GM10248 (cell line): ENCODE measurements at regions of chr1 and their contacts with region 1.

Region 1: GRCh38 chr1:246971090-246971721 is 36.7 kb downstream of the ZNF695 start:
- DNase-seq: no peak
- CTCF ChIP-seq: peak; percentile 93

Region 2: DNA sequence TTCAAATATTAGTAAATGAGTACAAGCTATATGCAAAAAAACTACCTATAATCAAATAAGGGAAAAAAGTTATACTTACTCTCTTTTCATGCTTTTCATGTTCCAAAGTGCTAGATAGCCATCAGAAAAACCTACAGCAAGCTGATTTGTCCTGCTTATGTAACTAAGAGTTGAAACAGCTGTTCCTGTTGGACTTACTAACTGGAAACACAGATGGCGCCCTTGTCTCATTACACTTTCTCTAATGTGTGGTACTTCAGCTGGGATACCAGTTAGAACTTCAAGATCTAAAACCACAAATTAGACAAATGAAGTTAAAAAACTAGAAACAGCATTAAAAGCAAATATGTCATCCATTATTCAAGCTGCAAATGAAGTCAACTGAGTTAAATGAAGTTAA is 63.7 kb before region 1 on chr1:
- CTCF ChIA-PET with region 1: interaction called, 11 read pairs
- POLR2A ChIA-PET with region 1: no interaction called
- DNase-seq: no peak
- CTCF ChIP-seq: peak; percentile 35

Region 3: GRCh38 chr1:246959944-246960693 is 11.1 kb before region 1 on chr1:
- CTCF ChIA-PET with region 1: interaction called, 45 read pairs
- POLR2A ChIA-PET with region 1: no interaction called
- DNase-seq: peak; percentile 48
- CTCF ChIP-seq: no peak